Heart left ventricle (tissue), 16 donors: ENCODE measurements at regions of chr11 and their contacts with region 1.

Region 1: GRCh38 chr11:1694064-1694845 is 2.7 kb upstream of the KRTAP5-6 start:
- DNase-seq: peak; percentile 88 to 95 (median 89)
- ATAC-seq: peak; percentile 85 to 98 (median 96)
- H3K4me3 ChIP-seq: peak overlapping the region in 10 of 12 donors; percentile 37 to 61 (median 48)
- H3K27ac ChIP-seq: peak overlapping the region in 10 of 12 donors; percentile 26 to 80 (median 64)
- H3K4me1 ChIP-seq: peaks cover 3 to 15% (median 10%) of the 10 kb centered on the region in 12 donors
- H3K27me3 ChIP-seq: peaks cover 0 to 12% (median 0%) of the 10 kb centered on the region in 9 donors
- CTCF ChIP-seq: peak; percentile 90 to 97 (median 94)
- POLR2A ChIP-seq: no peak

Region 2: GRCh38 chr11:1652771-1653540 is 41.3 kb before region 1 on chr11:
- intact Hi-C with region 1: loop called (anchors 1 to 5 kb)
- DNase-seq: peak; percentile 67 to 89 (median 72)
- ATAC-seq: peak; percentile 59 to 89 (median 80)
- H3K4me3 ChIP-seq: no peak overlapping the region
- H3K27ac ChIP-seq: no peak overlapping the region
- H3K4me1 ChIP-seq: peaks cover 0 to 8% (median 0%) of the 10 kb centered on the region in 12 donors
- H3K27me3 ChIP-seq: peaks cover 0 to 27% (median 0%) of the 10 kb centered on the region in 9 donors
- CTCF ChIP-seq: peak; percentile 95 to 99 (median 97)
- POLR2A ChIP-seq: no peak

Region 3: DNA sequence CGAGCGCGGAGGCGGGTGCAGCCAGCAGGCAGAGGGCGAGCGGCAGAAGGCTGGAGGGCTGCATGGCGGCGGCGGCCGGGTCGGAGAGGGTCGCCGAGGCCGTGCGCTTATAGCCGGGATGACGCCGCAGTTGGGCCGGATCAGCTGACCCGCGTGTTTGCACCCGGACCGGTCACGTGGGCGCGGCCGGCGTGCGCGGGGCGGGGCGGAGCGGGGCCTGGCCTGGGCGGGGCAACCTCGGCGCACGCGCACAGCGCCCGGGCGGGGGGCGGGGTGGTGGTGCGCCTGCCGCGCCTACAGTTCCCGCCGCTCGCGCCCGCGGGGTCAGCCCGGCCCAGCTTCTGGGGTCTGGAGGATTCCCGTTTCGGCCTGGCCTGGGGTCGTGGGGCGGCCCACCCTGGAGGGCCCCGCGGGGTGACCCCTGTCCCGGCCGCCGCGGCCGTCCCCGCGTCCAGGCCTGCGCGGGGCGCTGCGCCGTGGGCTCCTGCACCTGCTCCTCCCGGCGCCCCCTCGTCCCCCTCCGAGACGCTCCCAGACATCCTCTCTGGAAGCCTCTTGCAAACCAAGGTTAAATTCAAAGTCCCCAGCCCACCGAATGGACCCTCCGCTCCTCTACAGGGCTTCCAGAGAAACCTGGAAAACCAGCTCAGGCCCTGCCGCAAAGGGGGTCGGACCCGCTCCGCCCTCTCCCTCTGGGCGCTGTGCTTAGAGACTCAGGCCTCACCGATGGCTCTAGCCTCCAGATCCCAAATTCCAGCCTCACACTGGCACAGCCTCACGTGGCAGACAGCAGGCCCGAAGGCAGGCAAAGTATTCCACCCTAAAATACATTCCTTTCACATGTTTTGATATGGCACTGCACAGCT is 69.8 kb after region 1 on chr11 and contains the start of gene CTSD:
- intact Hi-C with region 1: loop called in 1 of 10 experiments (anchors 2 kb)
- DNase-seq: peak; percentile 91 to 97 (median 93)
- ATAC-seq: peak; percentile 51 to 84 (median 68)
- H3K4me3 ChIP-seq: peak within 1 kb of the TSS; percentile 80 to 100 (median 95)
- H3K27ac ChIP-seq: peak within 1 kb of the TSS; percentile 88 to 99 (median 98)
- H3K4me1 ChIP-seq: peaks cover 5 to 51% (median 48%) of the 10 kb centered on the region in 12 donors
- H3K27me3 ChIP-seq: no peaks in the 10 kb centered on the region
- CTCF ChIP-seq: peak in 3 of 12 donors; percentile 7 to 19 (median 10)
- POLR2A ChIP-seq: peak; percentile 12 to 83
- total RNA-seq, gene CTSD: 580 to 1,779 (median 722) TPM

Region 4: GRCh38 chr11:1832211-1832919 is 138.1 kb after region 1 on chr11:
- intact Hi-C with region 1: loop called (anchors 1 to 2 kb)
- DNase-seq: peak in 4 of 5 donors; percentile 52 to 80 (median 60)
- ATAC-seq: peak; percentile 74 to 83 (median 80)
- H3K4me3 ChIP-seq: peak overlapping the region in 9 of 12 donors; percentile 5 to 40 (median 28)
- H3K27ac ChIP-seq: no peak overlapping the region
- H3K4me1 ChIP-seq: peaks cover 0 to 15% (median 7%) of the 10 kb centered on the region in 12 donors
- H3K27me3 ChIP-seq: peaks cover 0 to 18% (median 0%) of the 10 kb centered on the region in 9 donors
- CTCF ChIP-seq: peak in 11 of 12 donors; percentile 95 to 100 (median 98)
- POLR2A ChIP-seq: peak in 1 of 2 donors; percentile 18

Region 5: DNA sequence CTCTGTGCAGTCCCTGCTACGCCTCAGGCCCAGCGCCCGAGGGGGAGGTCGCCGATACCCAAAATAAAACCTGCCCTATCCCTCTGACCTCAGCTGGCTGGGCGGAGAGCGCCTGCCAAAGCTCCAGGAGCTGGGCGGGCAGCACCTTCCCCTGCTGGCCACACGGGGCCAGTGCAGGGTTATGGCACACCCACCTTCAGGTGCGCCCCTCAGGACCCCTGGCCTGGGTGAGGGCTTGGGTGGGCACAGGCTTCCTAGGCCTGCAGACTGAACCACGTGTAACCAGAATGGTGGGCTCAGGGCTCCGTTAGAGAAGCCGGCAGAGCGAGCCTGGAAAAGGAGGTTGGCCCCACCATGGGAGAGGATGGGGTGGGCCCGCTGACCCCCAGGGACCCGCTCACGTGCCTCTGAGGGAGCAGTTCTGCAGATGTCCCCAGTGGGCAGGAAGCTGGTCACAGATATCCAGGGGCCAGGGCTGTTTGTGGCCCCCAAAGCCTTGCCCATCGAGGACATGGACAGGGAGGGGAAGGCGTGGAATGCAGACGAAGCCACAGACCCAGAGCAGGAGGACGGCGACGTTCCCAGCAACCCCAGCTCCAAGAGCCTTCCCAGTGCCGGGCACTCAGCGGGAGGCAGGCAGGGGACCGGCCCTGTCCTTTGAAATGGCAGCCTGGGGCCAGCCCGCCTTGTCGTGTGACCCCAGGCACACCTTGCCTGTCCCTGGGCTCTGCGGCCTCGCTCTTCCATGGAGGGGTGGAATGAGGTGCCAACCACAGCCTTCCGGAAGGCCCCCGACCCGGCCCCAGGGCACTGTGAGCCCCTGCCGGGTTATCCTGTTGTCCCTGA is 223.6 kb after region 1 on chr11:
- intact Hi-C with region 1: loop called in 2 of 10 experiments (anchors 10 kb)
- DNase-seq: peak in 4 of 5 donors; percentile 66 to 84 (median 77)
- ATAC-seq: peak; percentile 45 to 67 (median 59)
- H3K4me3 ChIP-seq: peak overlapping the region in 8 of 12 donors; percentile 7 to 40 (median 26)
- H3K27ac ChIP-seq: peak overlapping the region in 11 of 12 donors; percentile 38 to 93 (median 85)
- H3K4me1 ChIP-seq: peaks cover 12 to 66% (median 47%) of the 10 kb centered on the region in 12 donors
- H3K27me3 ChIP-seq: no peaks in the 10 kb centered on the region
- CTCF ChIP-seq: peak; percentile 51 to 78 (median 64)
- POLR2A ChIP-seq: no peak

Region 6: GRCh38 chr11:2151500-2152257 is 457.4 kb after region 1 on chr11:
- intact Hi-C with region 1: loop called (anchors 1 to 5 kb)
- DNase-seq: peak in 4 of 5 donors; percentile 67 to 78 (median 72)
- ATAC-seq: peak; percentile 30 to 64 (median 44)
- H3K4me3 ChIP-seq: no peak overlapping the region
- H3K27ac ChIP-seq: no peak overlapping the region
- H3K4me1 ChIP-seq: peaks cover 0 to 10% (median 5%) of the 10 kb centered on the region in 12 donors
- H3K27me3 ChIP-seq: peaks cover 7 to 44% (median 24%) of the 10 kb centered on the region in 9 donors
- CTCF ChIP-seq: peak; percentile 61 to 83 (median 73)
- POLR2A ChIP-seq: no peak